Keratinocyte (primary cell): ENCODE measurements at regions of chr2 and their contacts with region 1.

Region 1: GRCh38 chr2:88880441-88880953 is 189.0 kb downstream of the RPIA start:
- DNase-seq: no peak
- H3K4me3 ChIP-seq: no peak overlapping the region
- H3K27ac ChIP-seq: no peak overlapping the region
- H3K4me1 ChIP-seq: no peaks in the 10 kb centered on the region
- H3K27me3 ChIP-seq: no peaks in the 10 kb centered on the region
- CTCF ChIP-seq: peak; percentile 58 to 66 (median 59)

Region 2: DNA sequence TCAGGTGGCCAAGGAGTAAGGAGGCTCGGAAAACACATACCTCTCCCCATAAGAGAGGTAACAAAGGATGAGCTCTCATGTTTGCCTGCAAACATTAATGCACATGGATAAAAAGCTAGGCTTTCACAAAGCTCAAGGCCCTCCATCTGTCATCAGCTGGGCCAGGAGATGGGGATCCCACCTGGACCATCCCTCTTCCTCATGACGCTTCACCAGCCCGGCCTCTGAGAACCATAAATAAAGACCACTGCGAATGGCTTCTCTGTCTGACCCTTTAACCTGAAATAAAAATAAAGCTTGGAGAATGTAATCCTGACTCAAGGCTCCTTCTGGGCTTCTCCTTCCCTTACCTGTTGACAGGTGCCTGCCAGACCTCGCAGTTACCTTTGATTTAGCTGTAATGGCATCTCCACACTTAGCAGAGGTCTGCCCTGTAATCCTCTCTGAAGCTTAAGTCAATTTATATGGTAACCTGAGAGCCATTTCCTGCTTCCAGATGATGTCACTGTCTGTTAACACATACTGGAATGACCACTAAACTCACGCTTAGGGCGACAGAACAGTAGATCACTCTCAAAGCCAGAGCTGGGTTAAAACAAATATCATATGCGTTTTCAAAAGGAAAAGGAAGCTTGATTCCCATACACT is 398.7 kb before region 1 on chr2:
- dilution Hi-C with region 1: no loop called
- DNase-seq: no peak
- H3K4me3 ChIP-seq: no peak overlapping the region
- H3K27ac ChIP-seq: no peak overlapping the region
- H3K4me1 ChIP-seq: peaks cover 4% of the 10 kb centered on the region
- H3K27me3 ChIP-seq: no peaks in the 10 kb centered on the region
- CTCF ChIP-seq: peak in 1 of 3 experiments; percentile 16

Region 3: GRCh38 chr2:88818381-88818780 is 62.1 kb before region 1 on chr2:
- dilution Hi-C with region 1: no loop called
- DNase-seq: no peak
- H3K4me3 ChIP-seq: no peak overlapping the region
- H3K27ac ChIP-seq: no peak overlapping the region
- H3K4me1 ChIP-seq: peaks cover 3% of the 10 kb centered on the region
- H3K27me3 ChIP-seq: no peaks in the 10 kb centered on the region
- CTCF ChIP-seq: no peak

Region 4: GRCh38 chr2:88919087-88919738 is 38.7 kb after region 1 on chr2:
- dilution Hi-C with region 1: loop called (anchors 5 kb)
- DNase-seq: no peak
- H3K4me3 ChIP-seq: no peak overlapping the region
- H3K27ac ChIP-seq: no peak overlapping the region
- H3K4me1 ChIP-seq: no peaks in the 10 kb centered on the region
- H3K27me3 ChIP-seq: no peaks in the 10 kb centered on the region
- CTCF ChIP-seq: peak in 2 of 3 experiments; percentile 50 to 58